ENCODE measurements at regions of chr5 and their contacts with region 1.

Region 1: GRCh38 chr5:126864042-126864688 is 87.2 kb downstream of the LMNB1 start:
- DNase-seq: no peak
- ATAC-seq: no peak

Region 2: DNA sequence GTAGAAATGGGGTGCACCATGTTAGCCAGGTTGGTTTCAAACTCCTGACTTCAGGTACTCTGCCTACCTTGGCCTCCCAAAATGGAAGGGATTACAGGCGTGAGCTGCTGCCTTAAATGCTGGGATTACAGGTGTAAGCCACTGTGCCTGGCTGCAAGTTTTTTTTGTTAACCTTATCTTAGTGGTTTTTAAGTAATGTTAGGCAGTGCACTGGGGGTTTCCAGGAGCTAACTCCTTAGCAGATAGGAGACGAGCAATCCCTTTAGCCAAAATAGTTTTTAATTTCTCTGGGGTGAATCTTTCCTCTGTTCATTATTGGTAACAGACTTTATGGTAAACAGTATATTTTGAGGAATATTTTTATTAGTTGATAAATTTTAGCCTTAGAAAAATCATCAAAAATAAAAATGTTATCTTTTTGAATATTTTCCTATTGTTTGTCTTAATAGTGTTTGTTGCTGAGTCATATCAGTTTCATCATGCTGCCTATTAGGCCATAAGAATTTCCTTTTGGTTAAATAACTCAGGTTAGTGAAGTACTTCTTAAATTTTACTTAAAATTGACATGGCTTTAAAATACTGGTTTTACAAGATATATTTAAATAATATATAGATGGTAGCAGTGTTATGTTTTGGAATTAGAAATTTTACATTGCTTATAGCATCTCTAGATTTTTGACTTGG is 49.3 kb before region 1 on chr5:
- intact Hi-C with region 1: loop called (anchors 5 kb)
- DNase-seq: no peak
- ATAC-seq: no peak

Region 3: GRCh38 chr5:127313847-127314473 is 449.8 kb after region 1 on chr5:
- intact Hi-C with region 1: no loop called
- DNase-seq: peak; percentile 82
- ATAC-seq: peak; percentile 73